ENCODE measurements at regions of chr17 and their contacts with region 1.

Region 1: DNA sequence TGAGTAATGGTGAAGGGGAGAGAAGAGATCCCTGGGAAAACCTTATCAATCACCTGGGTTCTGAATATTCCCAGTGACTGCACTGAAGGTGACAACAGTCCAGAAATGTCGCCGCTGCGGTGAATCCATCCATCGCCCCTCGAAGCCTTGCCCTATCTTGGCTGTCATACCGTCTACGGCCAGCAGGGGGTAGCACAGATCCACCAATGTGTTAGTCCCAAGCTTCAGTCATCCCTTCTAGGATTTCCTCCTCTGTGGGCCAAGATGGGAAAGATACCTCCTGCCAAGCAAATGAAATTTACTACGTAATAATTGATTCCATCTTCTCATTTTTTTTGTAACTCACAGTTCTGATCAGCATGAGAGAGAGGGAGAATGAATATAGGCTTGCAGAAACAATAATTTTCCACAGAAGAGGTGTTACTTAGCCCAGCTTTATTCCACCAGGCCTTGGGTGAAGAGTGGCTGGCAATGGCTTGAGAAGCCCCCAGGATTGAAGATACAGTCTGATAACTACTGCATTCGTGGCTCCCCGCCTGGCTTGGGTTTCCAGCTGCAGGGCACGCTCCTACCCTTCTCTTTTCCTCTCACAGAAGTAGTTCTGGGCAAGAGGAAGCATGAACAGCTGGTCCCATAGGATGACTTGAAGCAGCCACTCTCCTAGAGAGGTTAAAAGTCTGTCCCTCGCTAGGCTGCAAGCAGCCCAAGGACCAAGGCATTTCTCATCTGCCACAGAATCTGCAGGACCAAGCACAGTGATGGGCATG is 2.6 kb upstream of the FMNL1 start:
- DNase-seq: peak; percentile 96
- H3K4me3 Mint-ChIP-seq: peak overlapping the region; percentile 84
- H3K27ac Mint-ChIP-seq: peak overlapping the region; percentile 76
- H3K4me1 Mint-ChIP-seq: peaks cover 38% of the 10 kb centered on the region
- H3K27me3 Mint-ChIP-seq: no peaks in the 10 kb centered on the region

Region 2: GRCh38 chr17:45170936-45171337 is 48.1 kb before region 1 on chr17:
- intact Hi-C with region 1: no loop called
- DNase-seq: no peak
- H3K4me3 Mint-ChIP-seq: no peak overlapping the region
- H3K27ac Mint-ChIP-seq: peak overlapping the region; percentile 72
- H3K4me1 Mint-ChIP-seq: peaks cover 19% of the 10 kb centered on the region
- H3K27me3 Mint-ChIP-seq: no peaks in the 10 kb centered on the region

Region 3: DNA sequence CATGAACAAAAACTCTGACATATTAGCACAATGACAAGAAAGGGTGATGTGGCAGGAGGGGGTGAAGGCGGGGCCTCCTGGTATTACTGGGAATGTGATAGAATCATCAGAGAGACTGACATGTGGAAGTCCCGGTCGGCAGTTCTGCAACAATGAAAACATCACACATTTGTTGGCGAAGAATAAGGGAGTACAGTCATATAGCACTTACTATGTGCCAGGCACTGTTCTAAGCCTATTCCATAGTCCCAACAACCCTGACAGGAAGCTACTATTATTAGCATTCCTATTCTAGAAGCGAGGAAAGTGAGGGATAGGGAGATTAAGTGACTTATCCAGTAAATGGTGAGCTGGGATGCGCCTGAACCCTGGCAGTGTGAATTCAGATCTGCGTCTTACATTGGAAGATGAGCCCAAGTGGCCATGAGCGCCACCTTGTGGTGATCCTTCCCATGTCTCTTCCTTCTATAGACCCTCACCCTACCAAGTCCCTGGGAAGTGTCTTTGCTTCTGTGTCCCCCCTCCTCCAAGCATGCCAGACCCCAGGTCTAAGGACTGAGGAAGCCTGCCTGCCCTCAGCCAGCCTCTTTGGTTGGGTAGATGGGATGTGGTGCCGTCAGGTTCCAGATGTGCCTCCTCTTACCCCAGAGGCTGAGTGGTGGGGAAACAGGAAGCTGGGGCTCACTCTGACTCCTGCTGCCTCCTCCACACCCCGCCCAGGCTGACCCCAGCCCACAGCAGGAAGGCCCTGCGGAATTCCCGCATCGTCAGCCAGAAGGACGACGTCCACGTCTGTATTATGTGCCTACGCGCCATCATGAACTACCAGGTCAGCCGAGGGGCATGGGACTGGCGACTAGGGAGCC is 16.6 kb after region 1 on chr17:
- intact Hi-C with region 1: loop called (anchors 1 kb)
- DNase-seq: peak; percentile 92
- H3K4me3 Mint-ChIP-seq: peak overlapping the region; percentile 55
- H3K27ac Mint-ChIP-seq: peak overlapping the region; percentile 83
- H3K4me1 Mint-ChIP-seq: peaks cover 60% of the 10 kb centered on the region
- H3K27me3 Mint-ChIP-seq: no peaks in the 10 kb centered on the region

Region 4: GRCh38 chr17:45247429-45248131 is 28.5 kb after region 1 on chr17:
- intact Hi-C with region 1: loop called (anchors 1 kb)
- DNase-seq: peak; percentile 98
- H3K4me3 Mint-ChIP-seq: peak overlapping the region; percentile 89
- H3K27ac Mint-ChIP-seq: peak overlapping the region; percentile 94
- H3K4me1 Mint-ChIP-seq: peaks cover 49% of the 10 kb centered on the region
- H3K27me3 Mint-ChIP-seq: no peaks in the 10 kb centered on the region

Region 5: DNA sequence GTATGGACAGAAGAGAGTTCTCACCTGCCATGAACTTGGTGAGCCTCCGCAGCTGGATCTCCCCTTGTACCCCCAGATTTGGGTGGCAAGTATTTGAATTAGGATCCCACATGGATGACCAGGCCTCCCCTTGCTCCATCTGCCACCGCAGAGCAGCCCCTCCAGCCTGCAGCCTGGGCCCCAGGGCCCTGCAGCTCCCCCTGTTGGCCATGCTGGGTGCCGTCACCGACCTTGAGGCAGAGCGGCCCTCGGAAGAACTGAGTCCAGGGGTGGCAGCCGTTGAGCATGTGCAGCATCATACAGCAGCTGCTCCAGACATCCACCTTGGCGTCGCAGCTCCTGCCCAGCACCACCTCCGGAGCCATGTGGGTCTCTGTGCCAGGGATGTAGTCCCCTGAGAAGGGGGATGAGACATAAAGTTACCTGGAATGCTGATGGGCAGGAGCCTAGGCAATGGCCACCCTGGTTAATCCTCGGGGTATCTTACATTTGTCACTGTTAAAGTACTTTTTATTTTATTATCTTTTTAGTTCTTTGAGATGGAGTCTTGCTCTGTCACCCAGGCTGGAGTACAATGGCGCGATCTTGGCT is 51.8 kb after region 1 on chr17:
- intact Hi-C with region 1: loop called (anchors 1 kb)
- DNase-seq: peak; percentile 86
- H3K4me3 Mint-ChIP-seq: no peak overlapping the region
- H3K27ac Mint-ChIP-seq: peak overlapping the region; percentile 45
- H3K4me1 Mint-ChIP-seq: peaks cover 20% of the 10 kb centered on the region
- H3K27me3 Mint-ChIP-seq: no peaks in the 10 kb centered on the region

Region 6: DNA sequence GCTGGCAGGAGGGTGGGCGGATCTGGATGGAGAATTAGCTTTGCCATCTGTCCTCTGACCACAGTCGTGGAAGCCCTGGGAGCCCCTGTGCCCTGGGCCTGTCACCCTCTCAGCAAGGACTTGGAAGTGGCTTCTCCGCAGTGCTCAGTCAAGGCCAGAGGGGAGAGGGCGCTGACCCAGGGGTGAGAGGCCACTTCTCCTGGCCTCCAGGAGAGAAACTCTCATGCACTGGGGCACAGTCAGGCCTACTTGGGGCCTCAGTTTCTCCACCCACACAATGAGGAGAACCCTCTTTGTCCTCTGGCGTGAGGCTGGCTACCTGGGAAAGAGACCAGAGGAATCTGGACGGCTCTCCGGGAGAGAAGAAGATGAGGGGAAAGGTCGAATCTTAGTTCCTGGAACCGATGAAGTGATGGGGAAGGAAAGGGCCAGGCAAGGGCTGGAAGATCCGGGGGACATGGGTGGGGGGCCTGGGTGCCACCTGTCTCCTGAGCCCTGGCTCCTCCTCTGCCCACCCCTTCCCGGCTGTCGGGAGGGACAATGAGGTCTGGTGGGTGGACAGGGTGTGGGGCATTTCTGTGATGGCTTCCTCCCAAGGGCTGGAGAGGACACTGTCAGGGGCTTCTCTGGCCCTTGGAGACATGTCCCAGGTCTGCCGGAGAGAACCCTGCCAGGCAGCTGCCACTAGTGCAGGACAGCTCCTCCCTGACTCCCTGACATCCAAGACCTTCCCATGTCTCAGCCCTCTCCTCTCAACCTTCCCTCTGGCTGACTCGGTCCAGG is 222.6 kb after region 1 on chr17:
- intact Hi-C with region 1: no loop called
- DNase-seq: no peak
- H3K4me3 Mint-ChIP-seq: no peak overlapping the region
- H3K27ac Mint-ChIP-seq: peak overlapping the region; percentile 11
- H3K4me1 Mint-ChIP-seq: peaks cover 23% of the 10 kb centered on the region
- H3K27me3 Mint-ChIP-seq: no peaks in the 10 kb centered on the region